Upper lobe of right lung (tissue), 1 donor: ENCODE measurements at regions of chr1 and their contacts with region 1.

Region 1: DNA sequence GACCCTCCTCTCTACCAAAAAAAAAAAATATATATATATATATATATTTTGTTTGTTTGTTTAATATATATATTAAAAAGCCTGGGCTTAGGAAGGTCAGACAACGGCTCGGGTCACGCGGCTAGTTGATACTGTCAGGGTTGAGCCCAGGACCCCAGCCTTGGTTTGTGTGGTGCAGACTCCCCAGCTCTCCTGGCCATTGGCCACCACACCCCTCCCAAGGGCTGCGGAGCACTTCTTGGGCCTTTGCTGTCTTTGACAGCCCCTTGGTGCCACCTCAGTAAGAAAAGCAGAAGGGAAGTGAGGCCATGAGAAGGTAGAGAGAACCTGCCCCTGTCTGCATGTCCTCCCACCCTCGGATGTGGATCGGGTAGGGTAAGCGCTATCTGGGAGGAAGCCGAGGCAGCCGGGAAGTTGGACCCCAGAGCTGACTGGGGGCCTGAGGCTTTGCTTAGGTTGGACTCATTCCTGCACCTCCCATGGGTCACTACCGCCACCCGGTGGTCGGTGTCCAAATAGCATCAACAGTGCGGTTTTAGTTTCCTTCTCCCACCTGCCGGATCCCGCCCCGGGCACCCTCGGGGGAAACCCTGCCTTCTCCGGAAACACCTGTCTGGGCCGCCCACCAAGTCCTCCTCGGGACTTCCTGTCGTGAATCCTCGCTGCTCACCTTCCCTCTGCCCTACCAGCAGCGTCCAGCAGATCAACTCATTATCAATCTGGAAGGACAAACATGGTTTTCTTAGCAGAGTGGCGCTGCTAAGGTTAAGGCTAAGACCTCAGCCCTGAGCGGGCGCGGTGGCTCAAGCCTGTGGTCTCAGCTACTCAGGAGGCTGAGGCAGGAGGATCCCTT is 29.8 kb upstream of the GNPAT start:
- DNase-seq: peak; percentile 92
- ATAC-seq: peak; percentile 96
- H3K4me3 ChIP-seq: peak overlapping the region; percentile 47
- H3K27ac ChIP-seq: no peak overlapping the region
- H3K4me1 ChIP-seq: peaks cover 3% of the 10 kb centered on the region
- H3K27me3 ChIP-seq: no peaks in the 10 kb centered on the region
- CTCF ChIP-seq: peak; percentile 95

Region 2: GRCh38 chr1:230797942-230798418 is 413.3 kb before region 1 on chr1:
- intact Hi-C with region 1: loop called (anchors 10 kb)
- DNase-seq: no peak
- ATAC-seq: peak; percentile 79
- H3K4me3 ChIP-seq: no peak overlapping the region
- H3K27ac ChIP-seq: no peak overlapping the region
- H3K4me1 ChIP-seq: no peaks in the 10 kb centered on the region
- H3K27me3 ChIP-seq: no peaks in the 10 kb centered on the region
- CTCF ChIP-seq: peak; percentile 60

Region 3: GRCh38 chr1:230917284-230918135 is 293.7 kb before region 1 on chr1:
- intact Hi-C with region 1: loop called (anchors 5 kb)
- DNase-seq: peak; percentile 74
- ATAC-seq: peak; percentile 93
- H3K4me3 ChIP-seq: no peak overlapping the region
- H3K27ac ChIP-seq: no peak overlapping the region
- H3K4me1 ChIP-seq: no peaks in the 10 kb centered on the region
- H3K27me3 ChIP-seq: no peaks in the 10 kb centered on the region
- CTCF ChIP-seq: peak; percentile 72